Heart left ventricle (tissue), 16 donors: ENCODE measurements at regions of chr2 and their contacts with region 1.

Region 1: GRCh38 chr2:61016808-61017555 is 538 bp upstream of the PEX13 start:
- DNase-seq: peak; percentile 63 to 74 (median 70)
- ATAC-seq: peak; percentile 81 to 92 (median 89)
- H3K4me3 ChIP-seq: peak overlapping the region; percentile 66 to 98 (median 78)
- H3K27ac ChIP-seq: peak overlapping the region; percentile 38 to 96 (median 89)
- H3K4me1 ChIP-seq: peaks cover 0 to 41% (median 29%) of the 10 kb centered on the region in 12 donors
- H3K27me3 ChIP-seq: no peaks in the 10 kb centered on the region
- CTCF ChIP-seq: no peak
- POLR2A ChIP-seq: no peak

Region 2: DNA sequence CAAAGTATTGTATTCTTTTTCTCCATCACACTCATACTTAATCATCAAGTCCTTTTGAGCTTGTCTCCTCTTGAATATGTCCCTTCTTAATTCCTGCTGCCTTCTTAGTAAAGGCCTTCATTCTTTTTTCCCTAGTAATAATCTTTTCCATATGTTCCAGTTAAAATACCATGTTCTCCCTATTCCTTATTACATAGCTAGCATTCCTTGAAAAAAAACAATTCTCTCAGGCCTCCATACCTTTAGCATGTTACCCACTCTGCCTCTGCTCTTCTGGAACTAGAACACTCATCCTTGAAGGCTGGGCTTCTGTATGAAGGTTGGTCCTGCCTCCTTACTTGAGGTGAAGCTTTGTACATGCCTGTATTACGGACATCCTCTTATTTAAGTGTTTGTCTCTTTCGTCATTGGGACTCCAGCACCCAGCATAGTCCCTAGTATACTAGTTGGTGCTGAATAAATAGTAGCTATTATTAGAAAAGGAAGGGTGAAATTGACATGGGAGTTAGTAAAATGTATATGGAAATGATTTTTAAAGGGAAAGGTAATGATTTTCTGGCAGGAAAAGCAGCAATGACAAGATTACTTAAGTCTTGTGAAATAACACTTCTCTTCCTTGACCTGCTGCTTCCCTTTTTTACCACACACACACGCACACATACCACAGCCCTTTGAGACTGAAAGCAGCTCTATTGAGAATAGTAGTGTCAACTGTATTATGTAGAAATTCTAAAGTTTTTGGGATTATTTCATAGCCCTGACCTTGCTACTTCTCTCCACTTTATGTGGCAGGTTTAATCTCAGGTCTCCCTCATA is 90.0 kb before region 1 on chr2:
- intact Hi-C with region 1: no loop called
- DNase-seq: no peak
- ATAC-seq: peak in 3 of 4 donors; percentile 33 to 72 (median 62)
- H3K4me3 ChIP-seq: no peak overlapping the region
- H3K27ac ChIP-seq: peak overlapping the region in 1 of 12 donors; percentile 64
- H3K4me1 ChIP-seq: peaks cover 0 to 19% (median 0%) of the 10 kb centered on the region in 12 donors
- H3K27me3 ChIP-seq: no peaks in the 10 kb centered on the region
- CTCF ChIP-seq: no peak
- POLR2A ChIP-seq: no peak

Region 3: GRCh38 chr2:61065715-61066709 is 49.0 kb after region 1 on chr2 and contains the start of gene SANBR:
- intact Hi-C with region 1: loop called in 4 of 10 experiments (anchors 5 to 10 kb)
- DNase-seq: peak; percentile 88 to 93 (median 91)
- ATAC-seq: peak; percentile 89 to 99 (median 98)
- H3K4me3 ChIP-seq: peak within 1 kb of the TSS; percentile 78 to 97 (median 92)
- H3K27ac ChIP-seq: peak within 1 kb of the TSS; percentile 57 to 94 (median 86)
- H3K4me1 ChIP-seq: peaks cover 0 to 15% (median 7%) of the 10 kb centered on the region in 12 donors
- H3K27me3 ChIP-seq: no peaks in the 10 kb centered on the region
- CTCF ChIP-seq: peak in 3 of 12 donors; percentile 14 to 30 (median 24)
- POLR2A ChIP-seq: peak in 1 of 2 donors; percentile 77
- total RNA-seq, gene SANBR: 3.6 to 10.7 (median 6.6) TPM